GM18951 (cell line): ENCODE measurements at regions of chr11 and their contacts with region 1.

Region 1: GRCh38 chr11:6682936-6683861 is at the start of gene MRPL17:
- POLR2A ChIP-seq: peak; percentile 94

Region 2: GRCh38 chr11:6473481-6474422 is 209.4 kb before region 1 on chr11 and contains the start of gene TRIM3:
- in situ Hi-C with region 1: no loop called
- POLR2A ChIP-seq: peak; percentile 60

Region 3: GRCh38 chr11:6531267-6531752 is 151.9 kb before region 1 on chr11:
- in situ Hi-C with region 1: loop called (anchors 10 kb)
- POLR2A ChIP-seq: no peak